Endothelial cell of umbilical vein (primary cell): ENCODE measurements at regions of chr5 and their contacts with region 1.

Region 1: GRCh38 chr5:140632150-140633020 is 590 bp downstream of the CD14 start:
- DNase-seq: peak; percentile 67
- H3K4me3 ChIP-seq: peak overlapping the region; percentile 28 to 57 (median 47)
- H3K27ac ChIP-seq: no peak overlapping the region
- H3K4me1 ChIP-seq: peaks cover 15% of the 10 kb centered on the region
- H3K27me3 ChIP-seq: peaks cover 0 to 3% of the 10 kb centered on the region in 2 experiments
- CTCF ChIP-seq: no peak
- POLR2A ChIP-seq: no peak

Region 2: DNA sequence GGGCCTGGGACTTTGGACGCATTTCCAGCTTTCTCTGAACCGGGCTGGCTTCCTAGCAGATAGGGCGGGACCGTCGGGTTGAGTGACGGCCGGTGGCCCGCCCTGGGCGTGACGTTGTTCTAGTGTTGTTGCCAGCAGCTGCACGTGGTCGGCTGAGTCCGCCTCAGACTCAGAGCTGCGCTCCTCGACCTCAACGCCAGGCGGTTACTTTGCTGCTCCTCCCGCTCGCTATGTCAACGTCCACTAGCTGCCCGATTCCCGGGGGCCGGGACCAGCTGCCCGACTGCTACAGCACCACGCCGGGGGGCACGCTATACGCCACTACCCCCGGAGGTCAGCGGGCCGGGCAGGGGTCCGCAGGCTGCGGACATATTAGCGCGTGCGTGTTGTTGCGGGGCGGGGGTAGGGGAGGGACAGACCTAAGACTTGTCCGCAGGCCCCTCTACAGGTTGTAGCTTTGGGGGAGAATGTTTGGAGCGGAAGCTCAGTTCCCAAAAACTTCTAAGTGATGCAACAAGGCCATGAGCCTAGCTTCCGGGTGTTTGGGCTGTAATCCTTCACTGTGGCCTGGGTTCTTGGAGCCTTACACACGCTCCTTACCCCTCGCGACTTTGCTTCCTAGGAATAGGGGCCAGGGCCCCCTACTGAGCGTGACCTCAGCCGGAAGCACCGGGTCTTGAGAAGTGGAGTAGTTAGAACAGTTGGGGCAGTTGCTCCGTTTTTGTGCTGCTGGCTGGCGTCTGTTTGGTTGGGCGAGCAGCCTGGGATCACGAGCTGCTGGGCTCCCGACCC is 84.7 kb before region 1 on chr5 and contains the start of gene EIF4EBP3:
- CTCF ChIA-PET with region 1: interaction called, 50 read pairs
- POLR2A ChIA-PET with region 1: no interaction called
- dilution Hi-C with region 1: no loop called
- intact Hi-C with region 1: loop called (anchors 1 kb)
- DNase-seq: peak; percentile 98
- H3K4me3 ChIP-seq: peak within 1 kb of the TSS in 1 of 3 experiments; percentile 20
- H3K27ac ChIP-seq: no peak within 1 kb of the TSS
- H3K4me1 ChIP-seq: peaks cover 24% of the 10 kb centered on the region
- H3K27me3 ChIP-seq: no peaks in the 10 kb centered on the region
- CTCF ChIP-seq: peak; percentile 45 to 69
- POLR2A ChIP-seq: no peak
- total RNA-seq, gene EIF4EBP3: 7.6 and 8.8 TPM in 2 replicates

Region 3: GRCh38 chr5:140564196-140565023 is 68.0 kb before region 1 on chr5 and contains the starts of genes APBB3 and SLC35A4:
- CTCF ChIA-PET with region 1: interaction called, 22 read pairs
- POLR2A ChIA-PET with region 1: no interaction called
- dilution Hi-C with region 1: no loop called
- intact Hi-C with region 1: no loop called
- DNase-seq: peak; percentile 97
- H3K4me3 ChIP-seq: peak within 1 kb of the TSS; percentile 49 to 84 (median 73)
- H3K27ac ChIP-seq: peak within 1 kb of the TSS; percentile 65
- H3K4me1 ChIP-seq: peaks cover 8% of the 10 kb centered on the region
- H3K27me3 ChIP-seq: no peaks in the 10 kb centered on the region
- CTCF ChIP-seq: no peak
- POLR2A ChIP-seq: peak; percentile 83
- total RNA-seq, gene APBB3: 12.1 and 13.3 TPM in 2 replicates
- total RNA-seq, gene SLC35A4: 60.9 and 65.6 TPM in 2 replicates

Region 4: GRCh38 chr5:140609126-140609525 is 23.3 kb before region 1 on chr5:
- CTCF ChIA-PET with region 1: interaction called, 6 read pairs
- POLR2A ChIA-PET with region 1: interaction called, 6 read pairs
- dilution Hi-C with region 1: no loop called
- intact Hi-C with region 1: loop called (anchors 2 kb)
- DNase-seq: peak; percentile 62
- H3K4me3 ChIP-seq: no peak overlapping the region
- H3K27ac ChIP-seq: peak overlapping the region; percentile 21
- H3K4me1 ChIP-seq: peaks cover 23% of the 10 kb centered on the region
- H3K27me3 ChIP-seq: no peaks in the 10 kb centered on the region
- CTCF ChIP-seq: no peak
- POLR2A ChIP-seq: no peak